ENCODE measurements at regions of chr19 and their contacts with region 1.

Region 1: DNA sequence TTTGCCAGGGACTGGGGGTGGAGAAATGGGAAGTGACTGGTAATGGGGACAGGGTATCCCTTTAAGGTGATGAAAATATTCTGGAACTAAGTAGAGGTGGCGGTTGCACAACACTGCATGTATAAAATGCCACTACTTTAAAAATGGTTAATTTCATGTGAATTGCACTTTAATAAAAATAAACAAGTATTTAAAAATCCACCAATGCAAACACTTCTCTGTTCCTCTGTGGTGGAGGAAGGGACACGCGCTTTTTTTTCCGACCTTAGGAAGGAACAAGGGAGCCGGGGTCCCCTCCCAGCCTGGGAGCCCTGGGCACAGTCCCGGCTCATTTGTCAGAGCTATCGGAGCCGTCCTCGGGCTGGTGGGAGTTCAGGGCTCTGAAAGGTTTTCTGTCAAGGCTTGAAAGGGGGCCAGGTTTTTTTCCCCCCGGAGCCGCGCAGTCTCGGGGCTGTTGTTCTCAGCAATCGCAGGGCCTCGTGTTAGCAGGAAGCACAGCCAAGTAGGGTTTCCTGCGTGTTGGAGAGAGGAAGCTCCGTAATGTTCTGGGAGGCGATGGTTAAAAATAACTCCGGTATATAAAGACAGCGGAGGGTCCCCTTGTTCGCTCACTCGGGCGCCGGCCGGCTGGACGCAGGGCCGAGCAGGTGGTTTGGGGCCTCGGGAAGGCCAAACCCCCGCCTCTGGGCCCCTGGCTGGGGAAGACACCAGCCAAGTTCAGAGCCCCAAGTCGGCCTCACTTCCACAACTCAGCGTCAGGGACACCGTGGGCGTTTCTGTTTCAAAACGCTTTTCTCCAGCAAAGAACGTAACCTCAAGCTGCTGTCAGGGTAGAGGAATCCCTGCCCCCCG is 41.2 kb upstream of the KLF2 start:
- DNase-seq: peak; percentile 83 to 84
- ATAC-seq: peak; percentile 65 to 79 (median 74)
- H3K4me3 ChIP-seq: peak overlapping the region; percentile 44
- H3K27ac ChIP-seq: peak overlapping the region; percentile 89
- H3K4me1 ChIP-seq: peaks cover 51% of the 10 kb centered on the region
- H3K27me3 ChIP-seq: no peaks in the 10 kb centered on the region
- CTCF ChIP-seq: no peak

Region 2: GRCh38 chr19:16324384-16325160 is 41.1 kb after region 1 on chr19 and contains the start of gene KLF2:
- intact Hi-C with region 1: loop called (anchors 2 to 5 kb)
- DNase-seq: peak; percentile 96 to 98
- ATAC-seq: peak; percentile 85 to 88 (median 86)
- H3K4me3 ChIP-seq: peak within 1 kb of the TSS; percentile 80
- H3K27ac ChIP-seq: peak within 1 kb of the TSS; percentile 91
- H3K4me1 ChIP-seq: peaks cover 12% of the 10 kb centered on the region
- H3K27me3 ChIP-seq: no peaks in the 10 kb centered on the region
- CTCF ChIP-seq: no peak
- total RNA-seq, gene KLF2: 12.7 to 35.4 (median 24.0) TPM

Region 3: GRCh38 chr19:17718947-17719711 is 1435.7 kb after region 1 on chr19 and contains the start of gene MAP1S:
- intact Hi-C with region 1: no loop called
- DNase-seq: peak; percentile 57 to 75
- ATAC-seq: peak; percentile 40 to 89 (median 76)
- H3K4me3 ChIP-seq: peak within 1 kb of the TSS; percentile 96
- H3K27ac ChIP-seq: peak within 1 kb of the TSS; percentile 83
- H3K4me1 ChIP-seq: peaks cover 32% of the 10 kb centered on the region
- H3K27me3 ChIP-seq: peaks cover 0 to 3% (median 0%) of the 10 kb centered on the region in 3 donors
- CTCF ChIP-seq: no peak
- total RNA-seq, gene MAP1S: 42.4 to 60.6 (median 49.1) TPM

Region 4: DNA sequence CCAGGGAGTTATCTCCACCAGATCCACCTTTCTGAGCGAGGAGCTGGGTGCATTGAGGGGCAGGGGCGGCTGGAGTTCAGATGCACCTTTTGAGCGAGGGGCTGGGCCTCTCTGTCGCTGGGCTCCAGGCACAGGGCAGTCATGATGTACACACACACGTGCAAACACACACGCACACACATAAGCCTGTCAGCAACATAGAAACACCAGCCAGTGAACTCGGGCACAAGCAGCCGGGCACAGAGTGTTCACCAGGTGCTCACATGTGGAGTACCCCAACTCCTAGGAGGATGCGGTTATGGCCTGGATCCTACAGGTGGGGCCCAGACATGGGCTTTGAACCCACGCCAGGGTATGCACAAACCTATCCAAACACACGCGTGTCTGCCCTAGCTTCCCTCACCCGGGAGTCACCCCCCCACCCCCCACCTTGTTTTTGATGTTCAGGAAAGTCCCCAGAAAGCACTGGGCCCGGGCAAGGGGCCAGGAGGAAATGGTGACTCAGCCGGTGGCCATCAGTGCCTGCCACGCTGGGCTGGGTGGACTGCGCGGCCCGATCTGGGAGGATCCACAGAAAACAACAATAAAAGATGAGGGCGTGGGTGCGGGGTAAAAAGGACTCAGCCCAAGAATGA is 1737.8 kb after region 1 on chr19:
- intact Hi-C with region 1: loop called in 1 of 2 experiments (anchors 5 kb)
- DNase-seq: peak; percentile 93 to 97
- ATAC-seq: peak; percentile 18 to 46 (median 31)
- H3K4me3 ChIP-seq: peak overlapping the region; percentile 59
- H3K27ac ChIP-seq: peak overlapping the region; percentile 97
- H3K4me1 ChIP-seq: peaks cover 60% of the 10 kb centered on the region
- H3K27me3 ChIP-seq: no peaks in the 10 kb centered on the region
- CTCF ChIP-seq: no peak